ENCODE measurements at regions of chr22 and their contacts with region 1.

Region 1: GRCh38 chr22:28741758-28742561 is at the starts of genes CHEK2 and HSCB:
- H3K4me3 Mint-ChIP-seq: peak within 1 kb of the TSS; percentile 99
- H3K27ac Mint-ChIP-seq: peak within 1 kb of the TSS; percentile 95
- H3K4me1 Mint-ChIP-seq: peaks cover 42% of the 10 kb centered on the region
- H3K27me3 Mint-ChIP-seq: no peaks in the 10 kb centered on the region

Region 2: GRCh38 chr22:28656181-28656580 is 85.8 kb before region 1 on chr22:
- intact Hi-C with region 1: no loop called
- H3K4me3 Mint-ChIP-seq: no peak overlapping the region
- H3K27ac Mint-ChIP-seq: no peak overlapping the region
- H3K4me1 Mint-ChIP-seq: no peaks in the 10 kb centered on the region
- H3K27me3 Mint-ChIP-seq: peaks cover 11% of the 10 kb centered on the region

Region 3: GRCh38 chr22:28759861-28760560 is 18.1 kb after region 1 on chr22:
- intact Hi-C with region 1: loop called (anchors 1 kb)
- H3K4me3 Mint-ChIP-seq: peak overlapping the region; percentile 20
- H3K27ac Mint-ChIP-seq: peak overlapping the region; percentile 37
- H3K4me1 Mint-ChIP-seq: peaks cover 29% of the 10 kb centered on the region
- H3K27me3 Mint-ChIP-seq: peaks cover 19% of the 10 kb centered on the region

Region 4: DNA sequence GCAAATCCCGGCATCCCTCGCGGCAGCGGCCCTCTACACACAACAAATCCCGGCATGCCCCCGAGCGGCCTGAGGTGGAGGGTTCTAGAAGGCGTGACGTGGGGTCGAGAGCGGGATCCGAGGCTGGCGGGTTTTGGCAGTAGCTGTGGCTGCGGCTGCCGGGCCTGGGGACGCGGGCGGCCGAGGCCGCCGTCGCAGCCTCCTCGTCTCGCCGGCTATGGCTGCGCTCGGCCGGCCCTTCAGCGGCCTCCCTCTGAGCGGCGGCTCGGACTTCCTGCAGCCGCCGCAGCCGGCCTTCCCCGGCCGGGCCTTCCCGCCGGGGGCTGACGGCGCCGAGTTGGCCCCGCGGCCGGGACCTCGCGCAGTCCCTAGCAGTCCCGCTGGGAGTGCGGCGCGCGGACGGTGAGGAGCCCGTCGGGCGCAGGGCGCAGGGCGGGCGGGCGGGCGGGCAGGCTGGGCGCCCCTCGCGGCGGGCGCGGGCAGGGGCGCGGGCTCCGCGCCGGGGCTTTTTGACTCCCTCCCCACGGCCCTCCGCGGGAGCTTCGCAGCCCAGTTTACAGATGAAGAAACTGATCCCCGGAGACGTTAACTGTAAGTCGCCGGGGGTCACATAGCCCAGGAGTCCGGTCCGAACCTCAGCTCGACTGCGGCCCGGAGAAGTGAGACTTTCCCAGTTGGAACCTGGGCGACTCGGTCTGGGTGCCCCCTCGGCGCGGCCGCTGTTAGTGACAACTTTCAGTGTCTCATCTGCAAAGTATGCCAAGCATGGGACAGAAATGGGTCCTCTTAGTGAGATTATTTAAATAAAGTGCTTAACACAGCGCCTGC is 30.9 kb after region 1 on chr22 and contains the start of gene CCDC117:
- intact Hi-C with region 1: loop called (anchors 1 kb)
- H3K4me3 Mint-ChIP-seq: peak within 1 kb of the TSS; percentile 76
- H3K27ac Mint-ChIP-seq: peak within 1 kb of the TSS; percentile 86
- H3K4me1 Mint-ChIP-seq: peaks cover 29% of the 10 kb centered on the region
- H3K27me3 Mint-ChIP-seq: no peaks in the 10 kb centered on the region

Region 5: GRCh38 chr22:28800308-28801077 is 58.5 kb after region 1 on chr22 and contains the start of gene XBP1:
- intact Hi-C with region 1: loop called (anchors 10 kb)
- H3K4me3 Mint-ChIP-seq: peak within 1 kb of the TSS; percentile 89
- H3K27ac Mint-ChIP-seq: peak within 1 kb of the TSS; percentile 100
- H3K4me1 Mint-ChIP-seq: peaks cover 47% of the 10 kb centered on the region
- H3K27me3 Mint-ChIP-seq: no peaks in the 10 kb centered on the region

Region 6: DNA sequence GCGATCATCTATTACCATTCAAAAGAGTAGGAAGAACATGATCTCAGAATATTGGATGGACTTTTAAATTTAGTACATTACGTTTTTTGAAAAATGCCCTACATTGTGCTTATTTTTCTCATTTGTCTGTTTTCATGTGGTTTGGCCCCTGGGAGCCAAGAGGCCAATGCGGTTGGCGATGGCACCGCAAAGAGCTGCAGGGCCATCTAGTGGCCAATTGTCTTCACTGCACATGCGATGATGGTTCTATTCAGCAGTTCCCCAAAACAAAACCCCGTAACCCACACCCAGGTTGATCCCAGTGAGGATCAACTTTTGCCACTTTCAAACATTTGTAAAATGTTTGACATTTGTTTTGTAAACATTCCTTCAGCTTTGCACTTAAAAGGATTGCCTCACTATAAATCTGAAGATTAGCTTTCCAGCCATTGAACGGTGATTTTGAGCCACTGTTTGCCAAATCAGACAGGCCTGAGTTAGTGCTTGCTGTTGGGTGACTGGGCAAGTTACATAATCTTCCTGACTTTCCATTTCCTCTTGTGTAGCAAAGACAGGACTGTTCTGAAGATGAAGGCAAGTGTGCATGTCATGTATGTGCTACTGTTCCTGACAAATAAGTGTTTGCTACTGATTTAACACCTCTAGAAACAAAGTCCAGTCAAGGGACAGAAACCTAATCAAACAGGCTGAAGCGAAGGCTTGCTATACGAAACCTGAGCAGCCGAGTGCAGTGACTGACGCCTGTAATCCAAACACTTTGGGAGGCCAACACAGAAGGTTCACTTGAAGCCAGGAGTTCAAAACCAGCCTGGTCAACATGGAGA is 87.6 kb after region 1 on chr22:
- intact Hi-C with region 1: loop called (anchors 5 kb)
- H3K4me3 Mint-ChIP-seq: no peak overlapping the region
- H3K27ac Mint-ChIP-seq: peak overlapping the region; percentile 14
- H3K4me1 Mint-ChIP-seq: peaks cover 32% of the 10 kb centered on the region
- H3K27me3 Mint-ChIP-seq: no peaks in the 10 kb centered on the region

Region 7: GRCh38 chr22:28855355-28856094 is 113.6 kb after region 1 on chr22:
- intact Hi-C with region 1: no loop called
- H3K4me3 Mint-ChIP-seq: no peak overlapping the region
- H3K27ac Mint-ChIP-seq: no peak overlapping the region
- H3K4me1 Mint-ChIP-seq: no peaks in the 10 kb centered on the region
- H3K27me3 Mint-ChIP-seq: peaks cover 5% of the 10 kb centered on the region

Measured in dendritic cell treated with granulocyte-macrophage colony-stimulating factor and Interleukin-4, amounts not matched to agents 40 ng/mL and 50 ng/mL, for 4 days (primary cell).